Activated CD4-positive, alpha-beta T cell treated with anti-CD3 and anti-CD28 coated beads for 36 hours (primary cell): ENCODE measurements at regions of chrX and their contacts with region 1.

Region 1: DNA sequence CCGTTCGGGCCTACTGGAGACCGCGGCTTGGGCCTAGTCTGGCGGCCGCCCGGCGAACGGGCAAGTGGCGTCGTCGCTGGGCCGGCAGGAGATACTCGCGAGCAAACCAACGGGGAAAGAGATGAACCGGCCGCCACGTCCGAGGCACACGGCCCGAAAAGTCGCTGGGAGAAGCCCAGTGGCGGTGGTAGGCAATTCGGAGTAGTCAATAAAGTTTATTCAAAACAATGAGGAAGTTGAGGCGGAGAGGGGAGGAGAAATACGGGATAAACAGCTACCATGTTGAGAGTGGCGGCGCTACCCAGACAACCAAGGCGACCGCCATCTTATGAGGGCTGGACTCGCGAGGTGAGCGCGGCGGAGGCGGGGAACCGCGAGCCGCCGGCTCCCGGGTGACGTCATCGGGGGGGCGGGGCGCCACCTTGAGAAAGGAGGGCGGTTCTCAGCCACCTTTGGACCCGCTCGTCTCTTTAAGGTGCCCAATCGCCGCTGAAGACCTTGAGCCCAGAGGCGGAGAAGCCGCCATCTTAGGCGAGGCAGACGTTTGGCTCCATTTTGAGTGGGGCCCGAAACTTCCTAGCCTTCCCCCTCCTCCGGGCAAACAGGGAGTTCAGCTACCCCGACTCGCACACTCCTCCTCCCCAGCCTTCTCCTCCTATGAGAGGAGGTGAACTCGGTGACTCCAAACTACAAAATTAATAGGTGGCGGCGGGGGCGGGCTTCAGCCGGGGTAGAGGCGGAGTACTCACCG is at the start of gene PHF8:
- DNase-seq: peak; percentile 96
- ATAC-seq: peak; percentile 91
- H3K4me3 Mint-ChIP-seq: peak within 1 kb of the TSS; percentile 95
- H3K27ac Mint-ChIP-seq: peak within 1 kb of the TSS; percentile 95
- H3K4me1 Mint-ChIP-seq: peaks cover 24% of the 10 kb centered on the region
- H3K27me3 Mint-ChIP-seq: no peaks in the 10 kb centered on the region
- total RNA-seq, gene PHF8: 47.4 to 47.8 TPM

Region 2: DNA sequence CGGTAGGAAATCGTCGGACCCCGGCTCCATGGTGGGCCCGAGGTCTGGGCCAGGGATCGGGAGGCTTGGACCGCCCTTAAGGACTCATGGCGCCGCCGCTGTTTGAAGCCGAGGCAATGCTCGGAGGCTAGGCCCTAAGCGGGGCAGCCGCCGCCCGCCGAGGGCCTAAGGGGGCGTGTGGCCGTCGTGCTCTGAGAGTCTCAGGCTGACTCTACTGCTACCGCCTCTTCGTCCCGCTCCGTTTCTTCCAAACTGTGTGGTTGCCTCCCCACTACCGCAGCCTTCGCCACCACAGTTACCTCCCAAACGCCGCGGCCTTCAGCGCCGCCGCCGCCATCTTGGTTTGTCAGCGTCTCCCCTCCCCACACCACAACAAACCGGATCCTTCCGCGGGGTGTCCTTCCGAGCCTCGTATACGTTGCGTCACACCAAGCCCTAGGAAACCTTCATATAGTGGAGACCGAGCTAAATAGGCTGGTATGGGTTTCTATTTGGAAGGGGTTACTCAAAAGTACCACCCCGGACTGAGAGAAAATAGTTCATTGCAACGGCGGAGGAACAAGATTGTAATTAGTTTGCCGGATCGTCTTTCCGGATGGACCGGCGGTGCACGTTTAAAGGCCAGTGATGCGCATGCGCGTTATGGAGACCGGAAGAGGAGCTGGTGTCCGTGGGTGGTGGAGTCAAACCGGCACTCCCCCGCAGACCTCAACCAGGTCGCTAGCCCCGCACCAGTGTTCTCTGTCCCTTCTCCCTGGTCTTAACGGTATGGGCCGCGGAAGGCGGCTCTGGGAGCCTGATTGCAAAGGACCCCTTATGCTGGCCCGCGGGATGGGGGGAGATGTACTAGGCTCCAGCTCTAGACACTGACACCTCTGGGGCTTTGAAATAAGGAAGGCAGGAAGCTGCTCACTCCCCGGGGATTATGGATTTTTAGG is 819.2 kb before region 1 on chrX and contains the start of gene KDM5C:
- CTCF ChIA-PET with region 1: no interaction called
- POLR2A ChIA-PET with region 1: interaction called, 3 read pairs
- intact Hi-C with region 1: loop called in 1 of 2 experiments (anchors 10 kb)
- DNase-seq: peak; percentile 90
- ATAC-seq: peak; percentile 79
- H3K4me3 Mint-ChIP-seq: peak within 1 kb of the TSS; percentile 79
- H3K27ac Mint-ChIP-seq: peak within 1 kb of the TSS; percentile 92
- H3K4me1 Mint-ChIP-seq: peaks cover 29% of the 10 kb centered on the region
- H3K27me3 Mint-ChIP-seq: no peaks in the 10 kb centered on the region
- total RNA-seq, gene KDM5C: 84.6 to 96.5 TPM

Region 3: GRCh38 chrX:53294024-53294648 is 750.2 kb before region 1 on chrX:
- CTCF ChIA-PET with region 1: no interaction called
- POLR2A ChIA-PET with region 1: no interaction called
- intact Hi-C with region 1: no loop called
- DNase-seq: no peak
- ATAC-seq: no peak
- H3K4me3 Mint-ChIP-seq: no peak overlapping the region
- H3K27ac Mint-ChIP-seq: no peak overlapping the region
- H3K4me1 Mint-ChIP-seq: no peaks in the 10 kb centered on the region
- H3K27me3 Mint-ChIP-seq: no peaks in the 10 kb centered on the region

Region 4: GRCh38 chrX:53683556-53684414 is 360.5 kb before region 1 on chrX:
- CTCF ChIA-PET with region 1: no interaction called
- POLR2A ChIA-PET with region 1: interaction called, 4 read pairs
- intact Hi-C with region 1: loop called (anchors 1 to 5 kb)
- DNase-seq: peak; percentile 94
- ATAC-seq: peak; percentile 76
- H3K4me3 Mint-ChIP-seq: peak overlapping the region; percentile 80
- H3K27ac Mint-ChIP-seq: peak overlapping the region; percentile 93
- H3K4me1 Mint-ChIP-seq: peaks cover 28% of the 10 kb centered on the region
- H3K27me3 Mint-ChIP-seq: no peaks in the 10 kb centered on the region

Region 5: DNA sequence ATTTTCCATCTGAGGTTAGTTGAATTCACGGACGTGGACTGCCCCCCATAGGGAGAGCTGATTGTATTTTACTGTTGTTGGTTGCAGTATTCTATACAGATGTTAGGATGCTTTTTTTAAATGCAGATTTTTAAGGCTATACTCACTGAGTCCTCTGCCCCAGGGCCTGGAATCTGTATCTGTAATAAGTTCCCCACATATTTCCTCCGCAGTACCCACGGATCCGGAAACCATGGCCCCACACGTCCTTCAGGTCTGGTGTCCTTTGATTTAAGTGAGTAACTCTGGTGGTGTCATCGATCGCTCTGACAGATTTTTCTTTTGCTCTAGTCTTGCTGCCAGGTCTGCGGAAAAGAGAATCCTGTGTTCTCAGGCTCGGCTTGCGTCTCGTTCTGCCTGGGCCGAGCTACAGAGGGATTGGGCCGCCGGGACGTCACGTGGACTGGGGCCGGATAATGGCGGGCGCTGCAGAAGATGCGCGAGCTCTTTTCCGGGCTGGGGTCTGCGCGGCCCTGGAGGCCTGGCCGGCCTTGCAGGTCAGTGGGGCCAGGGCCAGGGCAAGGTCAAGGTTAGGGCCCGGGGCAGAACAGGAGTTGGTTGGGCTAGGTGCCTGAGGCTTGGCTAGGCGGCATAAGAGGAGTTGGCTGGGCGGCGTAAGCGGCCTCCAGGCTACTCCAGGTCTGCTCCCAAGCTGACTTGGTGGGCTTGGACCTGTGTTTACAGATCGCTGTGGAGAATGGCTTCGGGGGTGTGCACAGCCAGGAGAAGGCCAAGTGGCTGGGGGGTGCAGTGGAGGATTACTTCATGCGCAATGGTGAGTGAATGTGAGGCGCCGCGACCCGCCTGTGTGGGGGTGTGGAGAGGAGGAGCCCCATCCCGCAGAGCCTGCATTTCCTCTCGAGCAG is 395.9 kb after region 1 on chrX and contains the start of gene TSR2:
- CTCF ChIA-PET with region 1: interaction called, 3 read pairs
- POLR2A ChIA-PET with region 1: no interaction called
- intact Hi-C with region 1: loop called in 1 of 2 experiments (anchors 1 kb)
- DNase-seq: peak; percentile 88
- ATAC-seq: peak; percentile 96
- H3K4me3 Mint-ChIP-seq: peak within 1 kb of the TSS; percentile 88
- H3K27ac Mint-ChIP-seq: peak within 1 kb of the TSS; percentile 83
- H3K4me1 Mint-ChIP-seq: peaks cover 18% of the 10 kb centered on the region
- H3K27me3 Mint-ChIP-seq: no peaks in the 10 kb centered on the region
- total RNA-seq, gene TSR2: 31.0 to 34.1 TPM

Region 6: DNA sequence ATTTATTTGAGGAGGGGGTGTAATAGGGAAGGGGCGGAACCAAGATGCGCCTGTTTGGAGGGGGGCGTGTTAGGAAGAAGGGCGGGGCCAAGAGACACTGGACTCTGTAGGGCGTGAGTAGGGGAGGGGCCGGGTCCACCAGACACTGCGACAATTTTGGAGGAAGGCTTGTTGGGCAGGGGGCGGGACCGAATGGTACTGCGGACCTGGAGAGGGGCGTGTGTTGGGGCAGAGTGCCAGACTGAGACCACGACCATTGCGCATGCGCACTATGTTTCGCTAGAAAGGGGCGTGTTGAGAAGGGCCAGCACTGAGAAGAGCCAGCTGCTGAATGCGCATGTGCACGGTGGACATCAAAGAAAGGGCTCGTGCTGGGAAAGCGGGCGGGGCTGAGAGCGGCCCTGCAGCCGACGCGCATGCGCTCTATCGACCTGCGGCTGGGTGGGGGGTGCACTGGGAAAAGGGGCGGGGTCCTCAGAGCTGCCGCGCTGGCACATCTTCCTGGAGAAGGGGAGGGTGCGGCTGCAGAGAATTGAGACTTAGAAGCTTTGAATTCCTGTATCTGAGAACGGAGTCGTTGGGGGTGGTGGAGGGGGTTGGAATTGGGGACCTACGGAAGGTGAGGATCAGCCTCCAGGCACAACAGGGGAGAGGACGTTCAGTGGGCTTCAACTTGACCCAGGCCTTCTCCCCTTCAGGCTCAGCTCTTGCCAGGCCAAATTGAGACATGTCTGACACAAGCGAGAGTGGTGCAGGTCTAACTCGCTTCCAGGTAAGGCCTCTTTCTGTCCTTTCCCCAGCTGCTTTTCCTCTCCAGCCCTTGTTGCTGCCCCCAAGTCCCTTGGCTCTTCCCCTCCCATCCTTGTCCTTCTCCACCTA is 764.5 kb after region 1 on chrX:
- CTCF ChIA-PET with region 1: no interaction called
- POLR2A ChIA-PET with region 1: no interaction called
- intact Hi-C with region 1: loop called in 1 of 2 experiments (anchors 1 kb)
- DNase-seq: peak; percentile 93
- ATAC-seq: peak; percentile 92
- H3K4me3 Mint-ChIP-seq: peak overlapping the region; percentile 87
- H3K27ac Mint-ChIP-seq: peak overlapping the region; percentile 89
- H3K4me1 Mint-ChIP-seq: peaks cover 16% of the 10 kb centered on the region
- H3K27me3 Mint-ChIP-seq: no peaks in the 10 kb centered on the region